Caco-2 (cell line): ENCODE measurements at regions of chr10 and their contacts with region 1.

Region 1: DNA sequence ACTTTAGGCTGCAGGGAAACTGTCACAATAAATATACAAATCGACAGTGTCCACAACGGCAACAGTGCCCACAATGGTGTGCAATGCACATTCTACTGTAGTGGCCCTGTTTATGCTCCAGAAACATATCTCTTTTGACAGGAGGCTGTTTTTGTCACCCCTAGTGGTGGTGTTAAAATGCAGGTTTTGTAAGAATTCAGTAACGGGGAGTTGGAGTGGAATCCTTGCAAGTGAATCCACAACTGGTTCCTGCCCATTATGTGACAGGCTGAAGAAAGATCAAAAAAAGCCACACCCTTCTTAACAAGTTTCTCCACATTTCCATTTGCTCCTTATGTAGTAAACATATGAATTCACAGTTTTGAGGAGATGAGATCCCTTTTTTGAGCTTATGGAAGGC is 58.5 kb downstream of the BEND7 start:
- DNase-seq: peak in 1 of 2 experiments; percentile 29
- H3K4me3 ChIP-seq: no peak overlapping the region
- H3K4me3 Mint-ChIP-seq: no peak overlapping the region
- H3K27ac Mint-ChIP-seq: no peak overlapping the region
- H3K4me1 ChIP-seq: no peaks in the 10 kb centered on the region
- H3K4me1 Mint-ChIP-seq: no peaks in the 10 kb centered on the region
- H3K27me3 ChIP-seq: no peaks in the 10 kb centered on the region
- H3K27me3 Mint-ChIP-seq: no peaks in the 10 kb centered on the region
- CTCF ChIP-seq: peak in 1 of 2 experiments; percentile 47

Region 2: DNA sequence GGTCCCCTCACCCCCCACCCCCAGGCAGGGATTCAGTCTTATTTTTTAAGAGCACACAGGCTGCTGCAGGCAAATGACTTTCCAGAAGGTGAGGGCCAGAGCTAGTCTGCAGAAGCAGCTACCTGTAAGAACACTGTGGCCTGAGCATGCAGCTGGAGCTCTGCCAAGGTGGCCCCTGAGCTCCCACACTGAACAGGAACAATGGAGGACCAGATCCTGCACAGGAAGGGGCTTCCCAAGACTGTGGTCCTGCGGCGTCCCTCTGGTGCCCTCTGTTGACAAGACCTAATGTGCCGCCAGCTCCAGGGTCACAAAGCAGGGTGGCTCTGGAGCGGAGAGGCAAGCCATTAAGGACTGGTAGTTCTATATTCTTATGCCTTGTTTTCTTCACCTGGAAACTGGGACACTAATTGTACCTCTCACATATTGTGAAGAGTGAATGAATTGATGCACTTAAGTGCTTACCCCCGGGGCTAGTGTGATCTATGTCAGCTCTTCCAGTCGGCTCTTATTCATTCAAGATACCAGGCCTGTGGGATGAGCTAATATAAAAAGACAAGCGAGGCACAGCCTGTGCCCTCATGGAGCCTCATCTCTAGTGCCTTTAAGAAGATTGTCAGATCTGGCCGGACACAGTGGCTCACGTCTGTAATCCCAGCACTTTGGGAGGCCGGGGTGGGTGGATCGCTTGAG is 66.5 kb after region 1 on chr10:
- CTCF ChIA-PET with region 1: interaction called, 6 read pairs
- POLR2A ChIA-PET with region 1: no interaction called
- intact Hi-C with region 1: loop called (anchors 5 kb)
- DNase-seq: peak; percentile 84 to 85
- H3K4me3 ChIP-seq: no peak overlapping the region
- H3K4me3 Mint-ChIP-seq: no peak overlapping the region
- H3K27ac Mint-ChIP-seq: no peak overlapping the region
- H3K4me1 ChIP-seq: peaks cover 8% of the 10 kb centered on the region
- H3K4me1 Mint-ChIP-seq: peaks cover 10% of the 10 kb centered on the region
- H3K27me3 ChIP-seq: no peaks in the 10 kb centered on the region
- H3K27me3 Mint-ChIP-seq: peaks cover 6% of the 10 kb centered on the region
- CTCF ChIP-seq: peak; percentile 85 to 93